ENCODE measurements at regions of chrX and their contacts with region 1.

Region 1: GRCh38 chrX:10189317-10190268 is 32.8 kb downstream of the CLCN4 start:
- DNase-seq: peak; percentile 89
- H3K4me3 Mint-ChIP-seq: no peak overlapping the region
- H3K27ac Mint-ChIP-seq: no peak overlapping the region
- H3K4me1 Mint-ChIP-seq: peaks cover 2% of the 10 kb centered on the region
- H3K27me3 Mint-ChIP-seq: peaks cover 2% of the 10 kb centered on the region

Region 2: GRCh38 chrX:10615931-10616775 is 426.6 kb after region 1 on chrX:
- intact Hi-C with region 1: loop called (anchors 5 kb)
- DNase-seq: peak; percentile 55
- H3K4me3 Mint-ChIP-seq: no peak overlapping the region
- H3K27ac Mint-ChIP-seq: no peak overlapping the region
- H3K4me1 Mint-ChIP-seq: peaks cover 2% of the 10 kb centered on the region
- H3K27me3 Mint-ChIP-seq: peaks cover 30% of the 10 kb centered on the region

Region 3: DNA sequence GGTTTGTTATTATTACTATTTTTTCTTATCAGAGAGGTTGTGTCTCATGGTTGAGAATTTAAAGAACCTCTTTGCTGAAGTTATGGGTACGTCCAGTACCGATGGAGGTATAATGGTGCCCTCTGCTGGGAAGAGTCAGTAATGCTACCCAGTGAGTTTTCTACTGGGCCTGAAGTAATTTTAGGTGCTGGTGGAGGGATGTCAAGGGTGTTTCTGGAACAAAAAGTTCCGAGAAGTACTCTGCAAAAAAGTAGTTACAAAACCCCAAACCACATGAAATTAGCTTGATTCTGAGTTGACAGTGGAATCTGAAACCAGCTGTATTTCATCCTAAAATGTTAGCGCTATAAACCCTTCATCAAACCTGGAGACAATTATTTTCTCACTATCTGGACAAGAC is 533.3 kb after region 1 on chrX:
- intact Hi-C with region 1: loop called (anchors 1 kb)
- DNase-seq: peak; percentile 76
- H3K4me3 Mint-ChIP-seq: no peak overlapping the region
- H3K27ac Mint-ChIP-seq: no peak overlapping the region
- H3K4me1 Mint-ChIP-seq: no peaks in the 10 kb centered on the region
- H3K27me3 Mint-ChIP-seq: no peaks in the 10 kb centered on the region

Region 4: DNA sequence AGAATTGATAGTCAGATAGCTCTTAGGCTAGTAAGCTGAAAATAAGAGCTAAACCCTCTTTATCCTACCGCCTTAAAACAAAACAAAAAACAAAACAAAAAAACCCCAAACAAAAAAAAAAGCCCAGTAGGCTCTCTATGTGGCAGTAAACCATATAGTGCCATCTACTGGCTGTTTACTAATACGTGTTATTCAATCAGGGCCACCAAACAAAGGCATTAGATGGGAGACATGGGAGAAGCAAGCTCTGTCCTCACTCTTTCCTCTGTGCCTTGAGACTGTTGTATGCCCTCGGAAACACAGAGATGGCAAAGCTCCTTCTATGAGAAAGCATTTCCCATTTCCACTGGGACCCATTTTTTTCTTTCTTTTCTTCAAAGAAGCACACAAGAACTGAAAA is 579.6 kb after region 1 on chrX:
- intact Hi-C with region 1: loop called (anchors 2 kb)
- DNase-seq: no peak
- H3K4me3 Mint-ChIP-seq: no peak overlapping the region
- H3K27ac Mint-ChIP-seq: no peak overlapping the region
- H3K4me1 Mint-ChIP-seq: no peaks in the 10 kb centered on the region
- H3K27me3 Mint-ChIP-seq: no peaks in the 10 kb centered on the region

Region 5: DNA sequence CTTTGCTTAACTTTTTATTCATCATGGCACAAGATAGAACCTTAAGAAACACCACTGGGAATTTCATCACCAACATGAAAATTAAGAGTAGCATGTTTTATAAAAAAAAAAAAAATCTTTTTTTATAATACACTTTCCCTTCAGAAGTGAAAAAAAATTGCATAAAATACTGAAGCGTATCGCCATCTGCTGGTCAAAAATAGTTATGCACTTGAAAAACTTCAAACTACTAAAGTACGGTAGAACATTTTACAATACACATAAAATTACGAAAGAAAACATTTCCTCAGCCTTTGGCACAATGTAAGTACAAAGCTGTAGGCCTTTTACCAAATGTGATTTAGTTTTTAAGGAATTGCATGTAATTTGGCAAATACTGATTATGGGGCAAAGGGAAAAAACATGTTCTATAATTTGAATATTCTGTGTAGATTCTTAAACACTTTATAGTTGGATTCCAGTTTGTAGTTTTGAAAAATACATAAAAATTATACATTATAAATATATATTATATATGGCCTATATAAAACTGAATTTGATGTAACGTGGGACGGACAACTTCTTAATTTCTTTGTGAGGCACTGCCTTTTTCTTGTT is 948.0 kb after region 1 on chrX:
- intact Hi-C with region 1: loop called (anchors 1 kb)
- DNase-seq: peak; percentile 62
- H3K4me3 Mint-ChIP-seq: no peak overlapping the region
- H3K27ac Mint-ChIP-seq: no peak overlapping the region
- H3K4me1 Mint-ChIP-seq: no peaks in the 10 kb centered on the region
- H3K27me3 Mint-ChIP-seq: no peaks in the 10 kb centered on the region

Measured in activated CD4-positive, alpha-beta T cell treated with anti-CD3 and anti-CD28 coated beads, Interleukin-2, amount 10 ng/mL, durations not matched to agents 24 days and 14 days (primary cell).